Naive thymus-derived CD4-positive, alpha-beta T cell (primary cell): ENCODE measurements at regions of chr7 and their contacts with region 1.

Region 1: DNA sequence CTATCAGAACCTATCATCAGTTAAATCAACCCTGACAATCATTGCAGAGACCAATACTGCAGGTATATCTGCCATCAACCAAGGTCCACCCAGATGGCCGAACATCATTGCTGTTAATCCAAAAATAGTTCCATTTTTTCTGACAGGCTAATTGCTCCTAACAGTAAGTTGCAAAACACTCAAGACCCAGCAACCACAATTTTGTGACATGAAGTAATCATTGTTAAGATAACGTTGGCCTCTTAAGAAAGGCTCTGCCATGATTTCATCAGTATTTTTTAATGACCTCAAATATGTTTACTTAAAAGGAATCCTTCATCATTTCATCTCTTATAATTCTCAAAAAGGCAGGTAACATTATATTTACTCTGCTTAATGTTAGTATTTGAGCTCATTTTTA is 553.4 kb upstream of the POM121L12 start:
- DNase-seq: no peak
- ATAC-seq: no peak
- H3K4me3 ChIP-seq: no peak overlapping the region
- H3K4me3 Mint-ChIP-seq: no peak overlapping the region
- H3K27ac ChIP-seq: no peak overlapping the region
- H3K27ac Mint-ChIP-seq: no peak overlapping the region
- H3K4me1 ChIP-seq: no peaks in the 10 kb centered on the region
- H3K4me1 Mint-ChIP-seq: no peaks in the 10 kb centered on the region
- H3K27me3 ChIP-seq: no peaks in the 10 kb centered on the region
- H3K27me3 Mint-ChIP-seq: no peaks in the 10 kb centered on the region

Region 2: GRCh38 chr7:52431082-52431815 is 50.8 kb before region 1 on chr7:
- CTCF ChIA-PET with region 1: no interaction called
- POLR2A ChIA-PET with region 1: no interaction called
- intact Hi-C with region 1: loop called in 1 of 2 experiments (anchors 5 kb)
- DNase-seq: no peak
- ATAC-seq: no peak
- H3K4me3 ChIP-seq: no peak overlapping the region
- H3K4me3 Mint-ChIP-seq: no peak overlapping the region
- H3K27ac ChIP-seq: no peak overlapping the region
- H3K27ac Mint-ChIP-seq: no peak overlapping the region
- H3K4me1 ChIP-seq: no peaks in the 10 kb centered on the region
- H3K4me1 Mint-ChIP-seq: no peaks in the 10 kb centered on the region
- H3K27me3 ChIP-seq: no peaks in the 10 kb centered on the region
- H3K27me3 Mint-ChIP-seq: no peaks in the 10 kb centered on the region